ENCODE measurements at regions of chr3 and their contacts with region 1.

Region 1: DNA sequence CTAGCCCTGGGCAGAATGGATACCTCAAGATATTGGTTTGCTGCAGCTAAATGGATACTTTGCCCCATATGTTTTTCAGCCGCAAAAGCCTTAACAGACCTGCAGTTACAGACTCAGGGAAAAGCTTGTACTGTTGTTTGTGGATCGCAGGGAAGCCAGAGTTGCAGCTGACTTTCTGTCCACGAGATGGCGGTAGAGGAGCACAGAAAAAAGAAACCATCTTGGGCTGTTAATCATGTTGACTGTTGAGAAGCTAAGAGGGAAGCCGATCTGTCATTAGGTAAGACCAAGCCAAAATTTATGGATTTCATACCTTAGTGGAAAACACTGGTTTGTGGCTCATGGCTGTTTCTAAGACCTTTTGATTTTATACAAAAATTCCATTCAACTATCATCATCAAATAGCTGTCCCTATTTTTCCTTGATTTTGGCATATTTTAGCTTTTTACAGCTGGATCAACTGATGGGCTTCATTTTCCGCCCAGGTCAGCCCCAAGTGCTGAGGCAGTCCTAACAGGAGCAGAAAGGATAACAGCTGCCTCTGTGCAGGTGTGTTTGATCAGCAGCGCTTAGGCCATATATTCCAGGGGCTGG is 205.7 kb upstream of the ZPLD1 start:
- DNase-seq: peak; percentile 70
- ATAC-seq: peak; percentile 67 to 80

Region 2: DNA sequence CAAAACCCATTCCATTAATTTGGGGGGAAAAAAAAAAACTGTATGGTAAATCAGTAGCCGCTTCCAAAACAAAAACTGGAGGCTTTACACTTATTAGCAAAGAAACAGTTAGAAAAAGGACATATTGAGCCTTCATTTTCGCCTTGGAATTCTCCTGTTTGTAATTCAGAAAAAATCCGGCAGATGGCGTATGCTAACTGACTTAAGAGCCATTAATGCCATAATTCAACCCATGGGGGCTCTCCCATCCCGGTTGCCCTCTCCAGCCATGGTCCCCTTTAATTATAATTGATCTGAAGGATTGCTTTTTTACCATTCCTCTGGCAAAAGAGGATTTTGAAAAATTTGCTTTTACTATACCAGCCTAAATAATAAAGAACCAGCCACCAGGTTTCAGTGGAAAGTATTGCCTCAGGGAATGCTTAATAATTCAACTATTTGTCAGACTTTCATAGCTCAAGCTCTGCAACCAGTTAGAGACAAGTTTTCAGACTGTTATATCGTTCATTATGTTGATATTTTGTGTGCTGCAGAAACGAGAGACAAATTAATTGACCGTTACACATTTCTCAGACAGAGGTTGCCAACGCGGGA is 533.3 kb before region 1 on chr3:
- intact Hi-C with region 1: loop called in 1 of 2 experiments (anchors 10 kb)
- DNase-seq: no peak
- ATAC-seq: peak in 1 of 2 donors; percentile 30

Region 3: GRCh38 chr3:101809178-101810021 is 419.8 kb before region 1 on chr3:
- intact Hi-C with region 1: loop called (anchors 2 to 5 kb)
- DNase-seq: no peak
- ATAC-seq: peak; percentile 32 to 33

Region 4: GRCh38 chr3:101964861-101965260 is 264.3 kb before region 1 on chr3:
- intact Hi-C with region 1: no loop called
- DNase-seq: peak; percentile 26
- ATAC-seq: peak in 1 of 2 donors; percentile 82

Region 5: GRCh38 chr3:102307429-102307828 is 78.3 kb after region 1 on chr3:
- intact Hi-C with region 1: no loop called
- DNase-seq: no peak
- ATAC-seq: no peak

Region 6: GRCh38 chr3:102536456-102536855 is 307.3 kb after region 1 on chr3:
- intact Hi-C with region 1: loop called (anchors 2 to 5 kb)
- DNase-seq: no peak
- ATAC-seq: peak; percentile 51 to 57

Measured in left cardiac atrium (tissue), 4 donors.